ENCODE measurements at regions of chr20 and their contacts with region 1.

Region 1: DNA sequence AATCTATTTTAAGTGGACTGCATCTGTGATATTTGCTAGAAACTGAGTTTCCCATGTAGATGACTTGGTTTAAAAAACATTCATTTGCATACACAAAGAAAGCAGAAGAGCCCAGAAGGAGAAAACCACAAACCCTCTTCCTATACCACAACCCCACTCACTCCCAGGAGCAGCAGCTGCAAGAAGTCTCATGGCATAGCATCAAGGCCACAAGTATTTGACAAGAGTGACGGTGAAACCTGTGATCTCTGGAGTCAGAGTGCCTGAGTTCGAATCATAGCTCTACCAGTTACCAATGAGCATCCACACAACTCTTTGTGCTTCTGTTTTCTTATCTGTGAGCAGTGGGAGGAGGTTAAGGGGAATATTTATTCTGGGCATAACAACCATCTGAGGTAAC is 44.7 kb upstream of the SIRPG start:
- DNase-seq: no peak
- H3K4me3 ChIP-seq: no peak overlapping the region
- H3K27ac ChIP-seq: no peak overlapping the region
- H3K4me1 ChIP-seq: peaks cover 6% of the 10 kb centered on the region; the same call in 1 of the 2 replicates
- H3K27me3 ChIP-seq: no peaks in the 10 kb centered on the region
- CTCF ChIP-seq: no peak

Region 2: GRCh38 chr20:1666802-1667201 is 35.5 kb before region 1 on chr20:
- CTCF ChIA-PET with region 1: no interaction called
- POLR2A ChIA-PET with region 1: no interaction called
- intact Hi-C with region 1: loop called (anchors 1 kb)
- DNase-seq: no peak
- H3K4me3 ChIP-seq: no peak overlapping the region
- H3K27ac ChIP-seq: no peak overlapping the region
- H3K4me1 ChIP-seq: peaks cover 17% of the 10 kb centered on the region
- H3K27me3 ChIP-seq: no peaks in the 10 kb centered on the region
- CTCF ChIP-seq: no peak

Region 3: GRCh38 chr20:2264118-2264517 is 561.8 kb after region 1 on chr20:
- CTCF ChIA-PET with region 1: no interaction called
- POLR2A ChIA-PET with region 1: no interaction called
- intact Hi-C with region 1: no loop called
- DNase-seq: no peak
- H3K4me3 ChIP-seq: no peak overlapping the region
- H3K27ac ChIP-seq: no peak overlapping the region
- H3K4me1 ChIP-seq: no peaks in the 10 kb centered on the region
- H3K27me3 ChIP-seq: peaks cover 18% of the 10 kb centered on the region
- CTCF ChIP-seq: no peak

Measured in PC-9 (cell line).